Activated CD4-positive, alpha-beta memory T cell treated with anti-CD3 and anti-CD28 coated beads for 36 hours (primary cell): ENCODE measurements at regions of chr7 and their contacts with region 1.

Region 1: DNA sequence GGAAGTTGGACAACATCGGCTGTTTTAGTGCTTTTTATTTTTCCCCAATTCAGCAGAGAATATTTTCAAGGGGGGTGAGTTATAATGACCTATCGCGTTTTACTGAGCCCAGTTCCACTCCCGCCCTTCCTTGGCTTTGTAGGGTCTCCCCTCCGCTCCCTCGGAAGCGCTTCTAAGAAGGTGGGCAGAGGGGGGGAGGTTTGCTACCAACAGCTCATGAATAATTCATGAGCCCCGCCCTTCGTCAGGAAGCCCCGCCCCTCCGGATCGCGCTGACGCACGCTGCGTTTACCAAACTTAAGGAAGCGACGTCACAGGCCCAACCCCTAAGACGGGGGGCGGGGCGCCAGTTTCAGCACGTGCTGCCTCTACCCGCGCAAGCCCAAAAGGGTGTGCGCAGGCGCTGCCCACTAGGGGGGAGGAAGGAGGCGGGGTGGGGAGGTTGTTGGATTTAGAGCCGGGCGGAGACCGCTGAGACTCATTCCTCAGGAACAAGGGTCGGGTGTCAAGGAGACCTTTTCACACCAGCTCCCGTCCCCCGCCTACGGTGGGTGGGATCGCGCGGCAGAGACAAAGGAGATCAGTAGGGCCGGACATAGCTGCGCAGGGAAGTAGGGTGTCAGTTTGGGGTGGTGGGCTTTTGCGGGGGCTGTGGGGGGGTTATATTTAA is 529 bp upstream of the MEPCE start:
- DNase-seq: peak; percentile 100
- H3K4me3 Mint-ChIP-seq: peak overlapping the region; percentile 98
- H3K27ac Mint-ChIP-seq: peak overlapping the region; percentile 100
- H3K4me1 Mint-ChIP-seq: peaks cover 46% of the 10 kb centered on the region
- H3K27me3 Mint-ChIP-seq: peaks cover 8% of the 10 kb centered on the region

Region 2: DNA sequence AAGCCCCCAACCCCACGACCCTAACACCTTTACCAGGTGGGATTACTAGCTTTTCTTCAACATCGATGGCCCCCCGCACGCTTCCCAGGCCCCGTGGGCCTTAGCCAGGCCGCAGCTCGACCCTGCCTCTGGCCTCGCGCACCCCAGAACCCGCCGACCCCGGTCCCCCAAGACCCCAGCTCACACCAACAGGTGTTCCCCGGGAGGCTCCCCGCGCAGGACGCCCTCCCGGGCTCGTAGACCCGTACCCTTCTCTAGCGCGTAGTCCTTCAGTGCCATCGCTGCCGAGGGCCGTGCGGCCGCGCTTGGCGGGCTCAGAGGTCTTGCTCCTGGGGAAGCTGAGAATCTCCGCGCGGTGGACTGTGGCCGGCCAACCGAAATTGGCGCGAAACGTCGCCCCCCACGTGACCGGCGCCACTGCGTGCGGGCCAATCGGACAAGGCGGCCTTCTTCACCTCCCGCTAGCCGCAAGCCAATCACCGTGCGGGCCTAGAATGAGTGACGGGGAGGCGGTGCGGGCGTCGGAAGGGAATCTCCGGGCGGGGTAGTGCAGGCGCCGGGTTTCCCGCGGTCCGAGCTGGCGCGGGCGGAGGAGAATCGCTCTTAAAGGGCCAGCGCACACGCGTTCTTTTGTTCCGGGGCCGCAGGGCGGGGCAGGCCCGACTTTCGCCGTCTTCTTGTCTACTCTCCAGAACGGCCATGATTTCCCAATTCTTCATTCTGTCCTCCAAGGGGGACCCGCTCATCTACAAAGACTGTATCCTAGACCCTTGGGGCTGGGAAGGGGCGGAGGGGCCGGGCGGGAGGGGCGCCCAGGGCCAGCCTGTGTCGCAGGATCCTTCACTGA is 327.9 kb before region 1 on chr7 and contains the starts of genes AP4M1 and MCM7:
- CTCF ChIA-PET with region 1: no interaction called
- POLR2A ChIA-PET with region 1: interaction called, 10 read pairs
- intact Hi-C with region 1: no loop called
- DNase-seq: peak; percentile 99
- H3K4me3 Mint-ChIP-seq: peak within 1 kb of the TSS; percentile 90
- H3K27ac Mint-ChIP-seq: peak within 1 kb of the TSS; percentile 95
- H3K4me1 Mint-ChIP-seq: peaks cover 40% of the 10 kb centered on the region
- H3K27me3 Mint-ChIP-seq: no peaks in the 10 kb centered on the region
- total RNA-seq, gene AP4M1: 11.3 to 12.2 TPM
- total RNA-seq, gene MCM7: 393 to 398 TPM

Region 3: GRCh38 chr7:100208911-100209408 is 220.1 kb before region 1 on chr7:
- CTCF ChIA-PET with region 1: no interaction called
- POLR2A ChIA-PET with region 1: no interaction called
- intact Hi-C with region 1: no loop called
- DNase-seq: peak; percentile 80
- H3K4me3 Mint-ChIP-seq: peak overlapping the region; percentile 58
- H3K27ac Mint-ChIP-seq: peak overlapping the region; percentile 76
- H3K4me1 Mint-ChIP-seq: peaks cover 43% of the 10 kb centered on the region
- H3K27me3 Mint-ChIP-seq: no peaks in the 10 kb centered on the region

Region 4: GRCh38 chr7:100221231-100221718 is 207.8 kb before region 1 on chr7:
- CTCF ChIA-PET with region 1: no interaction called
- POLR2A ChIA-PET with region 1: interaction called, 11 read pairs
- intact Hi-C with region 1: loop called (anchors 1 kb)
- DNase-seq: peak; percentile 90
- H3K4me3 Mint-ChIP-seq: peak overlapping the region; percentile 92
- H3K27ac Mint-ChIP-seq: peak overlapping the region; percentile 98
- H3K4me1 Mint-ChIP-seq: peaks cover 56% of the 10 kb centered on the region
- H3K27me3 Mint-ChIP-seq: no peaks in the 10 kb centered on the region

Region 5: GRCh38 chr7:100478966-100479665 is 50.0 kb after region 1 on chr7 and contains the start of gene TSC22D4:
- CTCF ChIA-PET with region 1: interaction called, 3 read pairs
- POLR2A ChIA-PET with region 1: no interaction called
- intact Hi-C with region 1: loop called (anchors 1 kb)
- DNase-seq: peak; percentile 95
- H3K4me3 Mint-ChIP-seq: peak within 1 kb of the TSS; percentile 95
- H3K27ac Mint-ChIP-seq: peak within 1 kb of the TSS; percentile 95
- H3K4me1 Mint-ChIP-seq: peaks cover 40% of the 10 kb centered on the region
- H3K27me3 Mint-ChIP-seq: no peaks in the 10 kb centered on the region
- total RNA-seq, gene TSC22D4: 87.8 to 89.5 TPM

Region 6: DNA sequence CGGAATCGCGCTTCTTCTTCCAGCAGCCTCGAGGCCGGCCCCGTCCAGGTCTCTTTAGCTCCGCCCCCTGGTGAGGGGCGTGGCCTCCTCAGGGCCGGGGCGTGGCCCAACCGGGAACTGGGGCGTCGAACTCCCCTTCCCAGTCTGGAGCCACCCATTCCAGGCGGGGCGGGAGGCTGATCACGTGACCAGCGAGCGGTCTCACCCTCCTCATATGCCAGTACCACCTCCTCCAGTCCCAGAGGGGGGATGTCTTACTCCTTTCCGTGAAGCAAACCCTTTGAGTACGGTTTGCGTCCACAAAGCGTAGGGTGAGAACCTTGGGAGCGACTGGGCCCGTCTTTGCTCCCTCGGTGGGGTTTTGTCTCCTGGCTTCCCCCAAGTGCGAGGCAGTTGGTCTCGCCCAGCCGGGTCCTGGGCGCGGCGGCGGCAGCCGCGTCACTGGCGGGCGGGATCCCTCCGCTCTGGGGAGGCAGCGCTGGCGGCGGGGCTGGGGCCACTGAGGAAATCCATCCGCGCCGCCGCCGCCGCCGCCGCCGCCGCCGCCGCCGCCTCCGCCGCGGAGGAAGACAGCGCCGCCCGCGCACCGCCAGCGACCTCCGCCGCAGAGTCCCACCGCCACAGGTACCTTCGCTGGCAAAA is 244.3 kb after region 1 on chr7 and contains the start of gene GNB2:
- CTCF ChIA-PET with region 1: no interaction called
- POLR2A ChIA-PET with region 1: interaction called, 3 read pairs
- intact Hi-C with region 1: loop called (anchors 1 kb)
- DNase-seq: peak; percentile 100
- H3K4me3 Mint-ChIP-seq: peak within 1 kb of the TSS; percentile 95
- H3K27ac Mint-ChIP-seq: peak within 1 kb of the TSS; percentile 97
- H3K4me1 Mint-ChIP-seq: peaks cover 8% of the 10 kb centered on the region
- H3K27me3 Mint-ChIP-seq: no peaks in the 10 kb centered on the region
- total RNA-seq, gene GNB2: 228 to 231 TPM